ENCODE measurements at regions of chr14 and their contacts with region 1.

Region 1: GRCh38 chr14:104768437-104769323 is 15.7 kb downstream of the SIVA1 start:
- DNase-seq: peak; percentile 72 to 86 (median 83)
- H3K4me3 ChIP-seq: no peak overlapping the region
- H3K27ac ChIP-seq: no peak overlapping the region
- H3K4me1 ChIP-seq: peaks cover 0 to 8% (median 4%) of the 10 kb centered on the region in 4 experiments
- H3K27me3 ChIP-seq: no peaks in the 10 kb centered on the region

Region 2: GRCh38 chr14:104708606-104709268 is 59.9 kb before region 1 on chr14:
- CTCF ChIA-PET with region 1: no interaction called
- POLR2A ChIA-PET with region 1: no interaction called
- DNase-seq: peak; percentile 67 to 81 (median 75)
- H3K4me3 ChIP-seq: no peak overlapping the region
- H3K27ac ChIP-seq: no peak overlapping the region
- H3K4me1 ChIP-seq: peaks cover 0 to 12% (median under 1%) of the 10 kb centered on the region in 4 experiments
- H3K27me3 ChIP-seq: no peaks in the 10 kb centered on the region

Region 3: GRCh38 chr14:104781271-104782077 is 12.8 kb after region 1 on chr14:
- CTCF ChIA-PET with region 1: interaction called, 23 read pairs
- POLR2A ChIA-PET with region 1: no interaction called
- DNase-seq: no peak
- H3K4me3 ChIP-seq: no peak overlapping the region
- H3K27ac ChIP-seq: no peak overlapping the region
- H3K4me1 ChIP-seq: peaks cover 0 to 24% (median 8%) of the 10 kb centered on the region in 4 experiments
- H3K27me3 ChIP-seq: no peaks in the 10 kb centered on the region

Region 4: GRCh38 chr14:104826189-104826860 is 57.6 kb after region 1 on chr14:
- CTCF ChIA-PET with region 1: interaction called, 30 read pairs
- POLR2A ChIA-PET with region 1: no interaction called
- DNase-seq: peak; percentile 66 to 82 (median 80)
- H3K4me3 ChIP-seq: peak overlapping the region; percentile 35 to 82 (median 66)
- H3K27ac ChIP-seq: no peak overlapping the region
- H3K4me1 ChIP-seq: peaks cover 0 to 23% (median 20%) of the 10 kb centered on the region in 4 experiments
- H3K27me3 ChIP-seq: peaks cover 0 to 23% (median 4%) of the 10 kb centered on the region in 5 experiments

Region 5: DNA sequence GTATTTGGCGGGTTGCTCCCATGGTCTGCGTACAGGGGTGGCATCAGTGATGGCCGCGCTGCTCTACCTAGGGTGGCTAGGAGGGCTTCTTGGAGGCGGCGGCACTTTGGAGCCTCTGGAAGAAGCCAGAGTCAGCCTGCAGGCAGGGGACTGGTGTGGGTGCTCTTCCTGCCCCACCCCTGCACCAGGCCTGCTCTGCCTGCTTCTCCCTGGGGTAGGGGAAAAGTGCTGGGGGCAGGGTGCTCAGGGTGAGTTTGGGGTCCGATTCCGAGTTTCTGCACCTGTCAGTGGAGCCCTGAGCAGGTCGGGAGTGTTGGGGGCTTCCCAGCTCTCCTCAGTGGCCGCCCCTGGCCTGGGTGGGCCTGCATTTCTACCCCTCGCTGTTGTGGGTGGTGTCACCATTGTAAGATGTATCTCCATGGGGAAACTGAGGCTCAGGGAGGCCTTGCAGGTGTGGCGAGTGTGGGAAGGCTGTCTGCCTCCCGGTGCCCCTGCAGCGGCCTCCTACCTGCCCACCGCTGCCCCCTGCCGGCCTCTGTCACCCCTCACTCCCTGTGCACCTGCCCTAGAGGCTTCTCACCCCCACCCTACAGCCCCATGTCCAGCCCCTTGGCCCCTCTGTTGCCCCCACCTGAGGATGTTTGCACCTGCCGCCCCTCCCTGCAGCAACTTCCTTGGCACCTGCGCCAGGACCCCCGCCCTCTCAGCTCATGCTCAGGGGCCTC is 101.9 kb after region 1 on chr14:
- CTCF ChIA-PET with region 1: interaction called, 11 read pairs
- POLR2A ChIA-PET with region 1: no interaction called
- DNase-seq: peak in 2 of 3 donors; percentile 27 to 33
- H3K4me3 ChIP-seq: no peak overlapping the region
- H3K27ac ChIP-seq: no peak overlapping the region
- H3K4me1 ChIP-seq: peaks cover 0 to 19% (median 13%) of the 10 kb centered on the region in 4 experiments
- H3K27me3 ChIP-seq: peaks cover 0 to 29% (median 12%) of the 10 kb centered on the region in 5 experiments